Caco-2 (cell line): ENCODE measurements at regions of chr12 and their contacts with region 1.

Region 1: DNA sequence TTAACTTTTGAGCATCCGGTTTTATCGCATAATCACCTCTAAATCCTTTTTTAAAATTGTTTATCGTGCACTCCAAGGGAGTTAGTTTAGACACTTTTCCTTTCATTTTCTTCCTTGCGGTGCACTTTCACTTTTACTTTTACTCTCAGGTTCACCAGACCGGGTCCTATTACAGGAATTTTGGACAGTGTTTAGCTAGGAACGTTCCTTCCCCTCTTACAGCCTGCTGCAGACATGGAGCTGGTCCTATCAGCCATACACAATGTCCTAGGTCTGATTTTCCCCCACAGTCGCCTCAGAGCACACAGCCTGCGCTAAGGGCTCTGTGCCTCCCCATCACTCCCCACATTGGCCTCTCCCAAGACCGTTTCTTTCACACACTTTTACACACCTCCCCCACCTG is 103.9 kb downstream of the ALG10 start:
- DNase-seq: no peak
- H3K4me3 ChIP-seq: no peak overlapping the region
- H3K4me3 Mint-ChIP-seq: no peak overlapping the region
- H3K27ac Mint-ChIP-seq: no peak overlapping the region
- H3K4me1 ChIP-seq: no peaks in the 10 kb centered on the region
- H3K4me1 Mint-ChIP-seq: no peaks in the 10 kb centered on the region
- H3K27me3 ChIP-seq: no peaks in the 10 kb centered on the region
- H3K27me3 Mint-ChIP-seq: peaks cover 4% of the 10 kb centered on the region
- CTCF ChIP-seq: no peak

Region 2: DNA sequence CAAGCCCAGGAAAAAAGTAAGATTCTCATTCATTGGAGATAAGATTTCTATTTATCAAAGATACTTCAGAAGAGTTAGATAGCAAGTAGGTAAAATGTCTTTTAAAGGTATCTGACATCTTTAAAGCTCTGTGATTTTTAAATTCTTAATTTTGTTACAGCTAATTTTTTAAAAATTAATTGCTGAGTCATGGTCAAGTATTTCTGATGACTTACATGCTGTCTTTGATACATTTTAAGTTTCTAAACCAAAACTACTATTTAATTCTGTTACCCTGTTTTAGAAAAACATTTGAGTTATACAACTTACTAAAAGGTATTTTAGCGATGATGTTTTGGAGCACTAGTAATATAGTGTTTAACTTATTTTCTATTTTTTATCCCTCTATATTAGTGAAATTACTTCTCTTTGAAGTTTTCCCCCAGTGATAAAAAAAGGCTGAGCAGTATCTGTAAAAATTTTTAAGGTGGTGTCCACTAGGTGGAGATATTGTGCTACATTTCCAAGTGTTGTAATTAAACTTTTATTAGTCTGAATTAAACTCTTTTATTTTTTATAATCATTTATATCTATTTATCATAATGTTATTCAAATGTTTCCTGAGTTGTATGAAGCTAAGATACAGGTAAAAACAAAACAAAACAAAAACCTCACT is 92.5 kb before region 1 on chr12:
- CTCF ChIA-PET with region 1: no interaction called
- POLR2A ChIA-PET with region 1: no interaction called
- intact Hi-C with region 1: loop called (anchors 2 kb)
- DNase-seq: peak in 1 of 2 experiments; percentile 29
- H3K4me3 ChIP-seq: no peak overlapping the region
- H3K4me3 Mint-ChIP-seq: no peak overlapping the region
- H3K27ac Mint-ChIP-seq: no peak overlapping the region
- H3K4me1 ChIP-seq: no peaks in the 10 kb centered on the region
- H3K4me1 Mint-ChIP-seq: no peaks in the 10 kb centered on the region
- H3K27me3 ChIP-seq: no peaks in the 10 kb centered on the region
- H3K27me3 Mint-ChIP-seq: no peaks in the 10 kb centered on the region
- CTCF ChIP-seq: peak; percentile 36 to 65

Region 3: GRCh38 chr12:34186492-34186891 is 60.3 kb after region 1 on chr12:
- CTCF ChIA-PET with region 1: interaction called, 3 read pairs
- POLR2A ChIA-PET with region 1: no interaction called
- intact Hi-C with region 1: loop called (anchors 1 kb)
- DNase-seq: no peak
- H3K4me3 ChIP-seq: no peak overlapping the region
- H3K4me3 Mint-ChIP-seq: no peak overlapping the region
- H3K27ac Mint-ChIP-seq: no peak overlapping the region
- H3K4me1 ChIP-seq: no peaks in the 10 kb centered on the region
- H3K4me1 Mint-ChIP-seq: no peaks in the 10 kb centered on the region
- H3K27me3 ChIP-seq: no peaks in the 10 kb centered on the region
- H3K27me3 Mint-ChIP-seq: no peaks in the 10 kb centered on the region
- CTCF ChIP-seq: peak; percentile 19 to 24

Region 4: DNA sequence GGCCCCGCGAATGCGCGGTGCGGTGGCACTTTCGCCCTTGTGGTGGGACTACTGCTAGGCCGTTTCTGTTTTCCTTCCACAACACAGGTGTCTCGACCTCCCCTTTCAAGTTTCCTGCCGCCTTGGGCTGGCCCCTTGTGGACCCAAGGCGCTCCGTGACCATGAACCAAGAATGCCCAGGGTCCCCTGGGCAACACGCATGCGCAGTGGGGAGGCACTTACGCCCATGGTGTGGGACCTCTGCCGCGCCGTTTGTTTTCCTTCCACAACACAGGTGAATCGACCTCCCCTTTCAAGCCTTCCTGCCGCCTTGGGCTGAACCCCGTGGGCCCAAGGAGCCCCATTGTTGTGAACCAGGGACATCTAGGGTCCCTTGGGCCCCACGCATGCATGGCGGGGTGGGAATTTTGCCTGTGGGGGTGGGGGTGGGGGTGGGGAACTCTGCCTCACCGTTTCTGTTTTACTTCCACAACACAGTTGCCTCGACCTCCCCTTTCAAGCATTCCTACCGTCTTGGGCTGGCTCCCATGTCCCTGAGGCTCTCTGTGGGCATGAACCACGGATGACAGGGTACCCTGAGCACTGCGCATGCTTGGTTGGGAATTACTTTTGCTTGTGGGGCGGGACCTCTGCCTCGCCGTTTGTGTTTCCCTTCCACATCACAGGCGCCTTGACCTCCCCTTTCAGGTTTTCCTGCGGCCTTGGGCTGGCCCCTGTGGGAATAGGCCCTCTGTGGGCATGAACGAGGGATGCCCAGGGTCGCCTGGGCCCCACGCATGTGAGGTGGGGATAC is 251.2 kb after region 1 on chr12:
- CTCF ChIA-PET with region 1: no interaction called
- POLR2A ChIA-PET with region 1: no interaction called
- intact Hi-C with region 1: no loop called
- DNase-seq: no peak
- H3K4me3 ChIP-seq: no peak overlapping the region
- H3K4me3 Mint-ChIP-seq: peak overlapping the region; percentile 50
- H3K27ac Mint-ChIP-seq: no peak overlapping the region
- H3K4me1 ChIP-seq: no peaks in the 10 kb centered on the region
- H3K4me1 Mint-ChIP-seq: no peaks in the 10 kb centered on the region
- H3K27me3 ChIP-seq: 0 out of 2 replicates have a peak, but pooled peaks cover 1% of the 10 kb centered on the region
- H3K27me3 Mint-ChIP-seq: peaks cover 42% of the 10 kb centered on the region
- CTCF ChIP-seq: no peak